Left colon (tissue), 2 donors: ENCODE measurements at regions of chr20 and their contacts with region 1.

Region 1: DNA sequence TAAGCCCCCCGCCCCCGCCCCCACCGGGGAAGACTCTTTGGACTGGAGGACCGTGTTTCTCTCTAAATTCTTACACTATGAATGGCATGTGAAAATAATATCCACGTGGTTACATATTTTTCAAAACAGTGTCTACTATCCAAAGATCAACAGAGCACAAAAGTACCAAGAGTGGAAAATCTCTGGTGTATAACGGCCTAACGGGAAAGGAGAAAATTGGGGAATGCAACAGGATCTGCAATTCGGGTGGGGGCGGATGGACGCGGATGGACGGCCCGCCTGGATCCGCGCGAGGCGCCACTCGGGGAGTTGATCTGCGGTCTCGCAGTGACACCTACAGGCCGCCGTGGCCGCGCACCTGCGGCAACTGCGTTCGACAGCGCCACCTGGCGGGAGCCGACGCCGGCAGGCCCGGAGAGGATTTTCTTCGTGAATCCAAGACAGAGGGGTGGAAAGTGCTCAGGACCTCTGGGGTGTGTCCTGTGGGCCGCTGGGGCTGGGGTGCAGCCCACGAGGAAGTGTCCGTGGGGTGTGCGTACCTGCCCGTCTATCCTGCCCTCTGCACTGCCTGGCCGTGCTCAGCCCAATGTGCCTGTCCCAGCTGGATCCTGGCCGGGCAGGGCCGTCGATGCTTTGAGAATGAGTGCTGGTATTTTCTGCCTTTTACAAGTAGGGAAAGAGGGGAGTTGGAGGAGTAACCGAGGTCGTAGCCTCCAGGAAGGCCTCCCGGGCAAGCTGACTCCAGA is 18.6 kb downstream of the ANKRD60 start:
- DNase-seq: peak; percentile 63 to 91
- ATAC-seq: peak; percentile 94

Region 2: GRCh38 chr20:57374931-57375651 is 834.7 kb before region 1 on chr20:
- intact Hi-C with region 1: loop called in 1 of 2 experiments (anchors 10 kb)
- DNase-seq: peak in 1 of 2 donors; percentile 15
- ATAC-seq: peak; percentile 56

Region 3: GRCh38 chr20:57514273-57514751 is 695.5 kb before region 1 on chr20:
- intact Hi-C with region 1: loop called in 1 of 2 experiments (anchors 5 kb)
- DNase-seq: peak in 1 of 2 donors; percentile 77
- ATAC-seq: peak; percentile 79